GM18951 (cell line): ENCODE measurements at regions of chr17 and their contacts with region 1.

Region 1: GRCh38 chr17:42322382-42323267 is 34.3 kb downstream of the STAT5A start:
- POLR2A ChIP-seq: no peak

Region 2: DNA sequence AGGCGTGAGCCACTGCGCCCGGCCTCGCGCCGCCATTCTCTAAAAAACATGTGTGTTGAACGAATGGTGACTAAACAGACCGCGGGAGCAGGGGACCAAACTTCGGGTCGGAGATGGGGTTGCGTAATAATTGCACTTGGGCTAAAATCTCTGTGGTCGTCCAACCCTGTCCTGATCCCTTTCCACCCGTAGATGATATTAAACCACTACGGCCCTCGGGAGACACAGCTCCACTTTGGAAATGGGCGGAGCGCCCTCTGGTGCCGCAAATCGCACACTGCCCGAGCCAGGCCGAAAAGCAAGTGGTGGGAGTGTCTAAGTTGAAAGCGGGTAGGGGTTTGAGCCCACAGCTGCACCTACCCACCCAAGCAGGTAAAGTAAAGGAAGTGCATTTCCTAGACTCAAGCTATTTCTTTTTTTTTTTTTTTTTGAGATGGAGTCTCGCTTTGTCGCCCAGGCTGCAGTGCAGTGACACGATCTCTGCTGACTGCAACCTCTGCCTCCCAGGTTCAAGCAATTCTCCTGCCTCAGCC is 83.4 kb after region 1 on chr17:
- in situ Hi-C with region 1: loop called (anchors 5 kb)
- POLR2A ChIP-seq: no peak

Region 3: GRCh38 chr17:42527273-42527703 is 204.7 kb after region 1 on chr17:
- in situ Hi-C with region 1: loop called (anchors 5 kb)
- POLR2A ChIP-seq: no peak